Uterus (tissue), 4 donors: ENCODE measurements at regions of chr19 and their contacts with region 1.

Region 1: DNA sequence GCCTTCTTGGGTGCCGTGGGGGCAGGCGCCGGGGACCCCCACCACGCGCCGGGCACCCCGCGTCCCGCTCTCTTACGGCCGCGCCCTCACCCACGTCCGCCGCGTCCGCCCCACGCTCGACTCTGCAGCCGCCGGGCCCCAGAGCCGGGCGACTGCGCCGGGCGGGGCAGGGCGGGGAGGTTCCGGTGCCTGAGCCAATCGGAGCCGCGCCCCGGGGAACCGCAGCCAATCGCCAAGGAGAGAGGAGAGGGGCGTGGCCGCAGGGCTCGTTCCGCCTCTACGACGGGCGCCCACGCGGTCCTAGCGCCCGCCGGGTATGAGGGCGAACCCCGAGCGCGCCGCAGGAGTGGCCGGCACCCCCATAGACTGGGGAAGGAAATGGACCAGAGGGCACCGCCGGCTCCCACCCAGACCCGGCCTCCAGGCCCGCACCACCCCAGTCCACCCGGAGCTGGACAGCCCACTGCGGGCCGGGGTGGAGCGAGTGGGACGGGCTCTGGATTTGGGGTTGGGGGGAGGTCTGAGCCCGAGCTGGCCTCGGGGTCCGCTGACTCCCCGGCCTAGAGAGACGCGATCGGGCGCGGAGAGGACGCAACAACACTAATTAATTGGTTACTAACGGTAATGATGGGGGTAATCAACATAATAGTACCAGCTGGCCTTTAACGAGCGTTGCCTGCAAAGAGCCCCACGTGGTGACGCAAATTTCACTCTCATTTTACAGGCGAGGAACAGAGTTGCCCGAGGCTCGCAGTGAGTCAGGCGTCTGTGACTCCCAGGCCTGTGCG is at the start of gene MFSD12:
- DNase-seq: peak; percentile 91 to 95
- H3K4me3 ChIP-seq: peak within 1 kb of the TSS; percentile 54 to 72
- H3K27ac ChIP-seq: peak within 1 kb of the TSS; percentile 65 to 73
- H3K4me1 ChIP-seq: peaks cover 0 to 14% of the 10 kb centered on the region in 2 donors
- H3K27me3 ChIP-seq: no peaks in the 10 kb centered on the region
- CTCF ChIP-seq: peak in 2 of 4 experiments; percentile 23 to 35
- POLR2A ChIP-seq: peak; percentile 78 to 81
- total RNA-seq, gene MFSD12: 0.59 to 44.9 (median 38.9) TPM

Region 2: GRCh38 chr19:3505598-3506383 is 51.9 kb before region 1 on chr19 and contains the start of gene FZR1:
- intact Hi-C with region 1: no loop called
- DNase-seq: peak; percentile 98 to 99
- H3K4me3 ChIP-seq: peak within 1 kb of the TSS; percentile 56 to 100
- H3K27ac ChIP-seq: peak within 1 kb of the TSS; percentile 79 to 90
- H3K4me1 ChIP-seq: peaks cover 0 to 3% of the 10 kb centered on the region in 2 donors
- H3K27me3 ChIP-seq: no peaks in the 10 kb centered on the region
- CTCF ChIP-seq: peak in 1 of 4 experiments; percentile 42
- POLR2A ChIP-seq: peak; percentile 62 to 84
- total RNA-seq, gene FZR1: 3.8 to 70.8 (median 33.0) TPM

Region 3: DNA sequence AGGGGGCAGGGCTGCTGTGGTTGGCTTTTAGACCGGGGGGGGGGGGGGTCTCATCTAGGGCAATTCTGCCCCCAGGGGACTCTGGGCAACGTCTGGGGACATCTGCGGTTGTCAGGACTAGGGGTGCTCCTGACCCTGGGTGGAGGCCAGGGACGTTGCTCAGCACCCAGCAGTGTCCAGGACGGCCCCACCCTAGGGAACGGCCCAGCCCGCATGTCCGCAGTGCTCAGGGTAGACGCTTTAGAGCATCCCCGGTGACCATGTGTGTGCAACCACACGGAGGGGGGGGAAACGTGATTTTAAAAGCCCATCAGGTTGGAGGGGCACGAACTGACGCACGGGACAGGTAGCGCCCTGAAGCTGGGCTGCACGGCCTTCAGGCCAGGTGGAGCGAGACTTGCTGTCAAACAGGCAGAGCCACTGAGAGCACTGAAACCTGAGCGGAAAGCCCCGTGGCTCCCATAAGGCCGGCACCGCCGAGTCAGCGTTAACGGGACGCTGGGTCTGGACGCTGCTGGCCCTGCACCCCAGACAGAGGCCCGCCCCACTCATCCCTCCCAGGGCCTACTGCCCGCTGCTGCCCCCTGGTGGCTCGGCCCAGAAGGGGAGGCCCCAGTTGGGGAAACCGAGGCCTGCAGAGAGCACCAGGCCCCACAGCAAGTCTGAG is 60.6 kb after region 1 on chr19:
- intact Hi-C with region 1: loop called (anchors 10 kb)
- DNase-seq: peak; percentile 64 to 78
- H3K4me3 ChIP-seq: no peak overlapping the region
- H3K27ac ChIP-seq: peak overlapping the region in 1 of 2 donors; percentile 20
- H3K4me1 ChIP-seq: no peaks in the 10 kb centered on the region
- H3K27me3 ChIP-seq: no peaks in the 10 kb centered on the region
- CTCF ChIP-seq: peak; percentile 90 to 96 (median 96)
- POLR2A ChIP-seq: peak in 1 of 2 donors; percentile 15